T-cell (primary cell): ENCODE measurements at regions of chr14 and their contacts with region 1.

Region 1: DNA sequence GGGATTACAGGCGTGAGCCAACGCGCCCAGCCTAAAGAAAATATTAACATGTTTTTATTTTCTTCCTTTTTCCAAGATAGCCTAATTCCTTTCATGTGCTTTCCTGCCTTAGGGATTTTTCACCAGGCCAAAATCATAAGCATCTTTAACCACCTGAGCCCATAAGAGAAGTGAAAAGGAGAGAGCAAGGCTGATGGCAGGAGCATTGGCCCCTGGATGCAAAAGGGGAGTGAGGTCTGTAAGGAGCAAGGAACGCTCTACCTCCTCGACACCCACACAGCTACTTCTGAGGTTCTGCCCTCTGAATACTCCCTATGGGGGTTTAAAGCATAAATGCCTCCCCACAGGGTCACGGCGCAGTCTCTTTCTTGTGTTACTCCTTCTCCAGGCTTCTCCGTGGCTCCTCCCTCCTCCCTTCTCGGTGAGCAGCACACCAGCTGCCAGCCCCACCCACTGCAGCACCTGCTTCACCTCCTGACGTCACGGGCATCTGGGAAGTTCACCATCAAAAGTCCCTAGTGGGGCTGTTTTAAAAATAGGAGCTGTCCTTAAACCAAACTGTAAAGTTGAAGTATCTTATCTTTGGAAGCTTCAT is 67.4 kb downstream of the SPTB start:
- DNase-seq: peak in 32 of 35 experiments; percentile 12 to 68 (median 28)
- ATAC-seq: peak in 2 of 4 experiments; percentile 50 to 93
- H3K4me3 ChIP-seq: no peak overlapping the region
- H3K4me3 Mint-ChIP-seq: no peak overlapping the region
- H3K27ac ChIP-seq: no peak overlapping the region
- H3K27ac Mint-ChIP-seq: no peak overlapping the region
- H3K4me1 ChIP-seq: peaks cover 0 to 3% of the 10 kb centered on the region in 2 experiments
- H3K4me1 Mint-ChIP-seq: peaks cover 5 to 7% (median 6%) of the 10 kb centered on the region in 3 donors
- H3K27me3 ChIP-seq: peaks cover 0 to 9% of the 10 kb centered on the region in 2 experiments
- H3K27me3 Mint-ChIP-seq: peaks cover 0 to 9% of the 10 kb centered on the region in 2 donors

Region 2: GRCh38 chr14:64736271-64737122 is 75.8 kb before region 1 on chr14:
- CTCF ChIA-PET with region 1: no interaction called
- POLR2A ChIA-PET with region 1: no interaction called
- DNase-seq: no peak
- ATAC-seq: no peak
- H3K4me3 ChIP-seq: no peak overlapping the region
- H3K4me3 Mint-ChIP-seq: no peak overlapping the region
- H3K27ac ChIP-seq: no peak overlapping the region
- H3K27ac Mint-ChIP-seq: no peak overlapping the region
- H3K4me1 ChIP-seq: peaks cover 0 to 55% of the 10 kb centered on the region in 2 experiments
- H3K4me1 Mint-ChIP-seq: peaks cover 16 to 26% (median 17%) of the 10 kb centered on the region in 3 donors
- H3K27me3 ChIP-seq: peaks cover 0 to 2% of the 10 kb centered on the region in 2 experiments
- H3K27me3 Mint-ChIP-seq: no peaks in the 10 kb centered on the region

Region 3: DNA sequence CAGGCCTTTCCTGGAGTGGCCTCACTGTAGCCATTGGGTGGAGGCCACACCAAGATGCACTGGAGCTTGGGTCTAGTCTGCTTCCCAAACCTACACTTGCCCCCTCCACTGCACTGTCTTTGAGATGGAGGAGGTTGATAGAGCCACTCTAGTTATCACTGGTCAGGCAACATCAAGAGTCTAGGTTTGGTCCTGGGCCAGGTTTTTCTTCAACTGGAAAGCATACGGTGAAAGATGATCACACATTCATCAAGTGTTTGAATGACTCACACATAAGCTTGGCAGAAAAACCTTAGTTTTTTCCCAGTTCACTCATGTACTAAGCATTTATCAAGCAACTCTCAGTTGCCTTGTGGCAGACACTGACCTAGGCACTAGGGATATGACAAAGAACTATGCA is 23.6 kb before region 1 on chr14:
- CTCF ChIA-PET with region 1: no interaction called
- POLR2A ChIA-PET with region 1: no interaction called
- DNase-seq: no peak
- ATAC-seq: no peak
- H3K4me3 ChIP-seq: no peak overlapping the region
- H3K4me3 Mint-ChIP-seq: no peak overlapping the region
- H3K27ac ChIP-seq: no peak overlapping the region
- H3K27ac Mint-ChIP-seq: no peak overlapping the region
- H3K4me1 ChIP-seq: no peaks in the 10 kb centered on the region
- H3K4me1 Mint-ChIP-seq: no peaks in the 10 kb centered on the region
- H3K27me3 ChIP-seq: peaks cover 0 to 6% of the 10 kb centered on the region in 2 experiments
- H3K27me3 Mint-ChIP-seq: no peaks in the 10 kb centered on the region

Region 4: GRCh38 chr14:64823305-64823861 is 11.1 kb after region 1 on chr14:
- CTCF ChIA-PET with region 1: interaction called, 3 to 11 read pairs
- POLR2A ChIA-PET with region 1: no interaction called
- DNase-seq: peak; percentile 27 to 77 (median 51)
- ATAC-seq: peak; percentile 84 to 93 (median 86)
- H3K4me3 ChIP-seq: no peak overlapping the region
- H3K4me3 Mint-ChIP-seq: peak overlapping the region in 2 of 3 donors; percentile 6 to 61
- H3K27ac ChIP-seq: no peak overlapping the region
- H3K27ac Mint-ChIP-seq: no peak overlapping the region
- H3K4me1 ChIP-seq: peaks cover 0 to 8% of the 10 kb centered on the region in 2 experiments
- H3K4me1 Mint-ChIP-seq: peaks cover 5 to 10% (median 6%) of the 10 kb centered on the region in 3 donors
- H3K27me3 ChIP-seq: peaks cover 0 to 38% of the 10 kb centered on the region in 2 experiments
- H3K27me3 Mint-ChIP-seq: peaks cover 20 to 31% of the 10 kb centered on the region in 2 donors

Region 5: DNA sequence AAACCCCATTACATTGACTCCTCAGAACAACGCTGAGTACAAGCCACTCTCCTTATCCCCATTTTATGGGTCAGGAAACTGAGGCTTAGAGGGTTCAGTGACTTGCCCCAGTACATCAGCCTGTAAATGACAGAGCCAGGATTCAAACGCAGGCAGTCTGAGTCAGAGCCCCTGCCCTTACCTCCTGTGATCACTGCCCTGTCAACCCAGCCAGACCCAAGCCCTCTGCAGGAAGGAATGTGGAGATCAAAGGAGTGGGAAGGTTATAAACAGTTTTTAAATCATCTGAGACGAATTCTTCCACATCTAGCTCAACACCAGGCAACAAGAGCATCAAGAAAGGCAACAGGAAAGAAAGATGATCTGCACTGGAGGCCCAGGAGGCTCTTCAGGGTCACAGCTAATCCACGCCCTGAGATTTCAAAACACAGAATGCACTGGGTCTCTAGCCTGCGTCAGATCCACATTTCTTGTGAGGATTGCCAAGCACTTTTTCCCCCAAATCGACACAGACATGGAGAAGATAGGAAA is 28.9 kb after region 1 on chr14:
- CTCF ChIA-PET with region 1: no interaction called
- POLR2A ChIA-PET with region 1: no interaction called
- DNase-seq: no peak
- ATAC-seq: no peak
- H3K4me3 ChIP-seq: no peak overlapping the region
- H3K4me3 Mint-ChIP-seq: no peak overlapping the region
- H3K27ac ChIP-seq: no peak overlapping the region
- H3K27ac Mint-ChIP-seq: no peak overlapping the region
- H3K4me1 ChIP-seq: no peaks in the 10 kb centered on the region
- H3K4me1 Mint-ChIP-seq: no peaks in the 10 kb centered on the region
- H3K27me3 ChIP-seq: peaks cover 2 to 20% of the 10 kb centered on the region in 2 experiments
- H3K27me3 Mint-ChIP-seq: peaks cover 40 to 51% of the 10 kb centered on the region in 2 donors